ENCODE measurements at regions of chr2 and their contacts with region 1.

Region 1: DNA sequence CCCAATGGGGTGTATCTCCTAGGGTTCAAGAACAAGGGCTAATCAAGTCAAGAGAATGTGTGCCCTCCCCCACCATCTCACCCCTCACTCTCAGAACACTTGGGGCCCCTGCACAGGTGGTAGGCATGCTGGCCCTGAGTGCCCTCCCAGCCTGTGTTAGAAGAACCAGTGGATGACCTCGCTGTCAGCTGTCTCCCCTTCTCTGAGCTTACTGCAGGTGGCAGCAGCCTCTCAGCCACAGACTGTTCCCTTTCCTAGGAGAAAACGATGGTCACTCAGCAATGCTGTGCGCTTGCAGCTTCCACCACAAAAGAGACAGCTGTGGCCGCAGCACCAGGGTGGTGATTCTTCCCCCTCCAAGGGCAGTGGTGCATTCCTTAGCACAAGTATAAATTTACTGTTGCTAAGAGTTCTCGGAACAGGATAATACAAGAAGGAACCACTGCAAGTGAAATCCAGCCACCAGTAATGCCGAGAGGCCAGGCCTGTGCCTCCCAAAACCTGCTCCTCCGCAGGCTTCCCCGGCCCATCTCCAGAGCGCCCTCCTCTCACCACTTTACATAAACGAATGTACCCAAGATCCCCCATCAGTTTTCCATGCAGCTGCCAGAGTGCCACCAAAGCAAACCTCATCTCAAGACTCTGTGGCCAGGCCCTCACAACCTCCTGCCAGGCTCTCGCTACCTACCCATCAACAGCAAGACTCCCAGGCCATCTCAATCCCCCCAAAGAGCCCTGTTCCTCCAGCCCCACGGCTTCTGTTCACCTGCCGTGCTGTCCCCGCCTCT is 935 bp upstream of the RAMP1 start:
- DNase-seq: peak in 1 of 2 donors; percentile 89
- H3K4me3 ChIP-seq: peak overlapping the region; percentile 81 to 87
- H3K27ac ChIP-seq: peak overlapping the region; percentile 97 to 98
- H3K4me1 ChIP-seq: peaks cover 0 to 26% of the 10 kb centered on the region in 2 donors
- H3K27me3 ChIP-seq: no peaks in the 10 kb centered on the region
- CTCF ChIP-seq: peak; percentile 82 to 89 (median 85)

Region 2: GRCh38 chr2:237674731-237675276 is 183.7 kb before region 1 on chr2:
- intact Hi-C with region 1: no loop called
- DNase-seq: peak; percentile 83 to 95
- H3K4me3 ChIP-seq: peak overlapping the region; percentile 32 to 57
- H3K27ac ChIP-seq: peak overlapping the region; percentile 83 to 86
- H3K4me1 ChIP-seq: peaks cover 14 to 59% of the 10 kb centered on the region in 2 donors
- H3K27me3 ChIP-seq: no peaks in the 10 kb centered on the region
- CTCF ChIP-seq: peak in 1 of 3 experiments; percentile 26

Region 3: DNA sequence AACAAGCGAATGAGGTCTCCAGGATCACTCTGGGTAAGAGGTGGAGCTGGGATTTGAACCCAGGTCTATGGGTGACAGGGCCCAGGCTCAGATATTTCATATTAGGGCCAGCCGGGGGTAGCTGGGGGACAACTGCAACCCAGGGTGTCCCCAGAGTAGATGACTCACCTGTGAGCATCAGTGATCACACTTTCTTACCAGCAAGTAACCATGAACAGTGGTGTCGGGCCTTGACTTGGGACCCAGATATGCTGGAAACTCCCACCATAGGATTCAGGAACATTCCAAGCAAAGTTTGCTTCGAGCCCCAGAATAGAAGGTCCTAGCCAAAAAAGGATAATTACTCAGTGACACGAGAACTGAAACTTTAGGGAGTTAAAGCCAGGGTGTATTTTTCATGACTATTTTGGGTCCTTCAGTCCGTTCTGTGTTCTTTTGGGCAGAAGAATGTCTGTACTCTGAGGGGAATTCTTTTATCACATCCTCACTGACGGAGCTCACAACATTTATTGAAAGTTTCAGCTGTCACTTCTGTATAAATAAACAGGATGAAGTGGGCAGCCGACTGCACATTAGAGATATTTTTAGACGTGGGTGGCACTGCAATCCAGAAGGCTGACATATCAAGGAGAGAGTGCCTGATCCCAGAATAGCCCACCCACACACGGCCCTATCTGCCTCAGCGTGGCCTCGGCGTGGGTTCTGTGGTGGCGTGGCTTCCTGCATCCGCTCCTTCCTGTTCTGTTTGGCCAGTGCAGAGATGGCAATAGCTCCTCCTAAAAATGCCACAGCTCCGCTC is 46.5 kb after region 1 on chr2:
- intact Hi-C with region 1: loop called (anchors 1 kb)
- DNase-seq: peak; percentile 64 to 98
- H3K4me3 ChIP-seq: no peak overlapping the region
- H3K27ac ChIP-seq: peak overlapping the region; percentile 96 to 99
- H3K4me1 ChIP-seq: peaks cover 11 to 46% of the 10 kb centered on the region in 2 donors
- H3K27me3 ChIP-seq: no peaks in the 10 kb centered on the region
- CTCF ChIP-seq: no peak

Region 4: GRCh38 chr2:237966565-237967462 is 108.3 kb after region 1 on chr2 and contains the start of gene UBE2F:
- intact Hi-C with region 1: loop called (anchors 1 kb)
- DNase-seq: peak; percentile 84 to 98
- H3K4me3 ChIP-seq: peak within 1 kb of the TSS; percentile 82 to 87
- H3K27ac ChIP-seq: peak within 1 kb of the TSS; percentile 61 to 69
- H3K4me1 ChIP-seq: peaks cover 20 to 31% of the 10 kb centered on the region in 2 donors
- H3K27me3 ChIP-seq: no peaks in the 10 kb centered on the region
- CTCF ChIP-seq: no peak
- total RNA-seq, gene UBE2F: 50.7 TPM

Region 5: DNA sequence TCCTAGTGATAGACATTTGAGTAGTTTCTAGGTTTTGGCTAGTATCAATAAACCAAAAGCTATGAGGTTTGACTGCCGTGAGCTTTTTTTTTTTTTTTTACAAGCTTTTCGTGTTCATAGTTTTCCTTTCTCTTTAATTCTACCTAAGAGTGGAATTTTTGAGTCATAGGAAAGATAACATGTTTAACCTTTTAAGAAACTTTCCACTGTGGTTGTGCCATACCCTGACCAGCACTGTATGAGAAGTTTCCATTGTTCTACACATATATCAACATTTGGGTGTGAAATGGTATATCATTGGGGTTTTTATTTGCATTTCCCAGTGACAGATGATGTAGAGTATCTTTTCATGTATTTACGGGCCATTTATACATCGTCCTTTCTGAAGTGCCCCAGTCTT is 140.0 kb after region 1 on chr2:
- intact Hi-C with region 1: no loop called
- DNase-seq: no peak
- H3K4me3 ChIP-seq: peak overlapping the region in 1 of 2 donors; percentile 19
- H3K27ac ChIP-seq: peak overlapping the region; percentile 6 to 26
- H3K4me1 ChIP-seq: peaks cover 0 to 22% of the 10 kb centered on the region in 2 donors
- H3K27me3 ChIP-seq: no peaks in the 10 kb centered on the region
- CTCF ChIP-seq: no peak

Region 6: GRCh38 chr2:238060542-238061314 is 202.2 kb after region 1 on chr2 and contains the start of gene SCLY:
- intact Hi-C with region 1: loop called (anchors 1 kb)
- DNase-seq: peak; percentile 89 to 98
- H3K4me3 ChIP-seq: peak within 1 kb of the TSS; percentile 85 to 92
- H3K27ac ChIP-seq: peak within 1 kb of the TSS; percentile 87 to 89
- H3K4me1 ChIP-seq: peaks cover 5 to 17% of the 10 kb centered on the region in 2 donors
- H3K27me3 ChIP-seq: no peaks in the 10 kb centered on the region
- CTCF ChIP-seq: no peak
- total RNA-seq, gene SCLY: 87.5 TPM

Region 7: GRCh38 chr2:238239872-238240751 is 381.6 kb after region 1 on chr2 and contains the start of gene HES6:
- intact Hi-C with region 1: loop called (anchors 5 kb)
- DNase-seq: peak; percentile 62 to 95
- H3K4me3 ChIP-seq: peak within 1 kb of the TSS; percentile 67 to 92
- H3K27ac ChIP-seq: peak within 1 kb of the TSS; percentile 64 to 79
- H3K4me1 ChIP-seq: peaks cover 0 to 23% of the 10 kb centered on the region in 2 donors
- H3K27me3 ChIP-seq: peaks cover 3% of the 10 kb centered on the region
- CTCF ChIP-seq: no peak
- total RNA-seq, gene HES6: 117 TPM